Uterus (tissue), 4 donors: ENCODE measurements at regions of chr11 and their contacts with region 1.

Region 1: DNA sequence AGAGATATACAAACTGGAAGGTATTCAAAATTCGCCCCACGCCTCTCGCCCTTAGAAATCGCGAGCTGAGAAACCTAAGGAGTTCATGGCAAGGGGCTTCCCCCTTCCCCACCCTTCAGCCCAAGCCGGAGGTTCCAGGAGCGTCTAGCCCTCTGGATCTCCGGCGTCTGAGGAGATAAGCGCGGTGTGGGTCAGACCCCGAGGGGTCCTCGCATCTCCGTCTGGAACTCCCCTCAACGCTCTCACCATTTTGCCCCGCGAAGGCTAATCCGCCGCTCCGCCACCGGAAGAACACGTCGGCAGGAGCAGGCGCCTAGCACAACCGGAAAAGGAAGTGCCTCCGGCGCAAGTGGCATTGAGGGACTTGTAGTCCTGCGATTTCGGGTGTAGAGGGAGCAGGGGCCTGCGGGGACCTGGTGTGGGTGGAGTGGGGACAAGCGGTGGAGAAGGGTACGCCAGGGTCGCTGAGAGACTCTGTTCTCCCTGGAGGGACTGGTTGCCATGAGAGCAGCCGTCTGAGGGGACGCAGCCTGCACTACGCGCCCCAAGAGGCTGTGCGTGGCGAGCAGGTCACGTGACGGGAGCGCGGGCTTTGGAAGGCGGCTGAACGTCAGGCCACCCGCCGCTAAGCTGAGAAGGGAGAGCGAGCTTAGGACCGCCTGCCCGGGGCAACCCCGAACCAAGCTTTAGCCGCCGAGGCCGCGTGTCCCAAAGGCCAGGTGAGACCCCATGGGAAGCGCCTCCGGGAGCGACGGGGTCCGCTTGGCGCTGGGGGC is at the starts of genes FEN1 and TMEM258:
- DNase-seq: peak; percentile 84 to 86
- H3K4me3 ChIP-seq: peak within 1 kb of the TSS; percentile 66 to 84
- H3K27ac ChIP-seq: peak within 1 kb of the TSS; percentile 91 to 98
- H3K4me1 ChIP-seq: peaks cover 3 to 5% of the 10 kb centered on the region in 2 donors
- H3K27me3 ChIP-seq: no peaks in the 10 kb centered on the region
- CTCF ChIP-seq: peak in 1 of 4 experiments; percentile 47
- POLR2A ChIP-seq: peak in 1 of 2 donors; percentile 72
- total RNA-seq, gene FEN1: 0.77 to 19.4 (median 6.8) TPM
- total RNA-seq, gene TMEM258: 14.6 to 96.9 (median 38.7) TPM

Region 2: DNA sequence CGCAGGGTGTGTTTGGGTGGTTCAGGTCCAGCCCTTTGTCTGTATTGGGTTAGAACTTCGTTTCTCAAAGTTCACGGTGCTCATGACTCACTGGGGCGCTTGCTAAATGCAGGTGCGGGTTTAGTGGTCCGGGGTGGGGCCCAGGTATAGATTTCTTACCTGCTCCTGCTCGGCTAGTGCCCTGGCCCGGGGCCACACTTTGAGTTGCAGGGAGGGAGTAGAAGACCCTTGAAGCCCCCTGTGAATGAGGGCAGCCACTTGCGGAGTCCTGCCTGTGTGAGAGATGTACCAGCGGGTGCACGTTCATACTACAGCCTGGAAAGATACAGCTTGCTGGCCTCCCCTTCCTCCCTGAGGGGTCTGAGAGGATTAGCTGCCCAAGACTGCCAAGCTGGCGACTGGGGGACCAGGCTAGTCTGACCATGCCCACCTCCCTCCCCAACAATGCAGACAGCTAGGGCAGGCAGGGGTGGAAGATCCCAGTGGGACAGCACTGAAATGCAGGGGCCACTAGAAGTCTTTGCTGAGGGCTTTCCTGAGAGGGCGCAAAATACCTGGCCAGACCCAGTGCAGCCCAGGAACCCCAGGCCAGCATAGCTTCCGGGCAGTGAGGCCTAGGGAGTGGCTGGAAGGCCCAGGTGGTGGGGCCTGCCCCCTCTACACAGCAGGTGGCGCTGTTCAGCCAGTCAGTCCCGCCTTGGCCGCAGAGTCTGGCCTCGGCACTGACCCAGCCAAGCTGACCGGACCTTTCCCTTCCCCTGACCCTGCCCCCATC is 45.1 kb before region 1 on chr11:
- intact Hi-C with region 1: loop called (anchors 5 kb)
- DNase-seq: peak; percentile 75 to 84
- H3K4me3 ChIP-seq: no peak overlapping the region
- H3K27ac ChIP-seq: no peak overlapping the region
- H3K4me1 ChIP-seq: no peaks in the 10 kb centered on the region
- H3K27me3 ChIP-seq: no peaks in the 10 kb centered on the region
- CTCF ChIP-seq: peak; percentile 84 to 89 (median 86)
- POLR2A ChIP-seq: no peak

Region 3: DNA sequence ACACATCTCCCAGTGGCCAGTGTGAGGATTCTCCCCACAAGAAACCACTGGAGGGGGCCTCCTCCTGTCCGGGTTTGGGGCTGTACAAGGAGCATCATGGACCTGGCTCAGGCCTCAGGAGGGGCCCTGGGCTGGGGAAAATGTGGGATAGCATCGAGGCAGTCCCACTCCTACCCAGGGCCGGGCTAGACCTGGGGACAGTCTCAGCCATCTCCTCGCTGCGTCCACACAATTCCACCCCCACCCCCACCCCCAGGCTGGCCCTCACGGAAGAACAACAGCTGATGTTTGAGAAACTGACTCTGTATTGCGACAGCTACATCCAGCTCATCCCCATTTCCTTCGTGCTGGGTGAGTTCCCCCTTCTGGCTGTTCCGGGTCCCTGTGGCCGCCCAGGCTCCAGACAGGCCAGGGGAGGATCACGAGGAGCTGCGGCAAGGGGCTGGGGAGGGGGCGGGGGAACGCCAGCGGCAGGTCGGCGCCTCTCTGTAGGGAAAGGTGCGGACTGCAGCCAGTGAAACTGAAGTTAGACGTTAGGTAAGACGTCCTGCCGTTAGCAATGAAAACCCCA is 162.4 kb after region 1 on chr11:
- intact Hi-C with region 1: no loop called
- DNase-seq: peak; percentile 81 to 83
- H3K4me3 ChIP-seq: peak overlapping the region; percentile 27 to 39
- H3K27ac ChIP-seq: peak overlapping the region; percentile 69 to 87
- H3K4me1 ChIP-seq: no peaks in the 10 kb centered on the region
- H3K27me3 ChIP-seq: no peaks in the 10 kb centered on the region
- CTCF ChIP-seq: peak in 3 of 4 experiments; percentile 23 to 49 (median 29)
- POLR2A ChIP-seq: peak in 1 of 2 donors; percentile 39